Panc1 (cell line): ENCODE measurements at regions of chr11 and their contacts with region 1.

Region 1: GRCh38 chr11:77047007-77047927 is 13.1 kb downstream of the B3GNT6 start:
- DNase-seq: peak; percentile 87
- ATAC-seq: peak; percentile 89
- H3K4me3 ChIP-seq: peak overlapping the region; percentile 21 to 67
- H3K27ac ChIP-seq: no peak overlapping the region
- H3K4me1 ChIP-seq: peaks cover 7% of the 10 kb centered on the region
- H3K27me3 ChIP-seq: no peaks in the 10 kb centered on the region
- CTCF ChIP-seq: peak; percentile 69

Region 2: DNA sequence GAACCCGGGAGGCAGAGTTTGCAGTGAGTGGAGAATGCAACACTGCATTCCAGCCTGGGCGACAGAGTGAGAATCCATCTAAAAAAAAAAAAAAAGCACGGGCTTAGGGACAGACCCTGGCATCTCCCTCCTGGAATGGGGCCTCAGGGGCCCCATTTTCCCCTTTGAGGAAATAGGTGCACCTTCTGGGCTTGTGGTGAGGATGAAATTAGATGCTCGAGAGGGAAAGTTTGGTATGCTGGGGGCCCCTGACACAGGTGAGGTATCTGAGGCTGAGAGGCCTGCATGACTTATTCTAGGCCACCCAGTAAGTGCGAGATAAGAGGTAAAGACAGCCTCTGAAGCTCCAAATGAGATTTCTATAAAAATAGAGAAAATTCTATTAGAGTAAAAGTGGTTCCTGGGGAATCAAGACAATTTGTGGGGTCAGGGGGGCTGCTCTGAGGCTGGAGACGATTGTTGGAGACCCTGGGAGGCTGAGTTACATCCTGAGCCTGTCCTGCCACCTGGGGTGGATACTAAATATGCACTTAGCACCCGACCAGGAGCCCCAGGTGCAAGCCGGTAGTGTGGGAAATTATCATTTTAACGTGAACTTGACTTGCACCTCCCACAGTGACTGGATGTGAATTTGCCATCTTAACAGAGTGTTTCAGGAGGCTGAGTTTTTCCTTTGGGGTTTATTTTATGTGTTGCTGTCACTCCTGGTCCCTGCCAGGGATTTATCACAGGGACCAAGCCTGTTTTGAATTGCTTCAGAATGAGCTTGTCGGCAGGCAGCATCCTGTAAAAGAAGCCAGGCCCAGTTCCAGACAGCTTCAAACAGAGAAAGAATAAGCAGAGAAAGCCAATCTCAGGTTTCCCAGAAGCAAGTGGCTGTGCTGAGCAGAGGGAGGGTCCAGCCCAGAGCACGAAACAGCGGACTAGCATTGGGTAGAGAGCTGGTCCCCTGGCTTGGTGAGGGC is 312.5 kb before region 1 on chr11:
- CTCF ChIA-PET with region 1: interaction called, 10 read pairs
- POLR2A ChIA-PET with region 1: no interaction called
- in situ Hi-C with region 1: no loop called
- intact Hi-C with region 1: loop called (anchors 2 kb)
- DNase-seq: no peak
- ATAC-seq: 0 out of 2 replicates have a peak, but pooled peaks have one; percentile 5
- H3K4me3 ChIP-seq: no peak overlapping the region
- H3K27ac ChIP-seq: no peak overlapping the region
- H3K4me1 ChIP-seq: no peaks in the 10 kb centered on the region
- H3K27me3 ChIP-seq: no peaks in the 10 kb centered on the region
- CTCF ChIP-seq: no peak

Region 3: DNA sequence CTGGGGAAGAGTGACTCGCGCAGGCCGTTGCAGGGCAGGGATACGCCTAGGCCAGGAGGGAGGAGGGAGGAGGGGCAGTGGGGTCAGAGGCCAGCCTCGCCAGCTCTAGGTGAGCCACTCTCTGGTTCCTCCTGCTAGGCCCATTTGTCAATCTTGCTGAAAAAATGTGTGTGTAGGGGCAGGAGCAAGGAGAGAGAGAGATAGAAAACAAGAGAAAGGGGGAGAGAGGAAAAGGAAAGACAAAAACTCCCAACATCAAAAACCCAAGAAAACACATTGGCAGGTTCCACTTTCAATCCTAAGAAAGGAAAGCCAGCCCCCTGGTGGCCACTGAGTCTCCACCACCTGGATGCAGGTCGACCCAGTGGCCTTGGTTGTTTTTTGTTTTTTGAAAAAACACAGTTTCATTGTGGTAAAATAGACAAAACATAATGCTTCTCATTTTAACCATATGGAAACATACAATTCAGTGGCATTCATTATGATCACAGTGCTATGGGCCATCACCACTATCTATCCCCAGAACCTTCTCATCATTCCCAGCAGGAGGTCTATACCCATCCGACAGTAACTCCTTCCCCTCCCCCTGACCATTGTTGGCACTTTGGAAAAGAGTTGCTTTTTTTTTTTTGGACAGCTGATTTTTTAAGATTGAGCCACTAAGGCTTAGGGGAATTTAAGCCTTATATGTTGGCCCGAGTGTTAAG is 66.3 kb after region 1 on chr11:
- CTCF ChIA-PET with region 1: interaction called, 15 read pairs
- POLR2A ChIA-PET with region 1: no interaction called
- in situ Hi-C with region 1: no loop called
- intact Hi-C with region 1: loop called (anchors 5 kb)
- DNase-seq: no peak
- ATAC-seq: peak; percentile 47; the same call in 1 of the 2 replicates
- H3K4me3 ChIP-seq: no peak overlapping the region
- H3K27ac ChIP-seq: no peak overlapping the region
- H3K4me1 ChIP-seq: peaks cover 8% of the 10 kb centered on the region
- H3K27me3 ChIP-seq: no peaks in the 10 kb centered on the region
- CTCF ChIP-seq: peak; percentile 86

Region 4: GRCh38 chr11:77127232-77127911 is 80.1 kb after region 1 on chr11:
- CTCF ChIA-PET with region 1: interaction called, 11 read pairs
- POLR2A ChIA-PET with region 1: no interaction called
- in situ Hi-C with region 1: no loop called
- intact Hi-C with region 1: no loop called
- DNase-seq: no peak
- ATAC-seq: peak; percentile 82
- H3K4me3 ChIP-seq: peak overlapping the region; percentile 41 to 60
- H3K27ac ChIP-seq: no peak overlapping the region
- H3K4me1 ChIP-seq: peaks cover 7% of the 10 kb centered on the region; the same call in 1 of the 2 replicates
- H3K27me3 ChIP-seq: no peaks in the 10 kb centered on the region
- CTCF ChIP-seq: peak; percentile 100

Region 5: DNA sequence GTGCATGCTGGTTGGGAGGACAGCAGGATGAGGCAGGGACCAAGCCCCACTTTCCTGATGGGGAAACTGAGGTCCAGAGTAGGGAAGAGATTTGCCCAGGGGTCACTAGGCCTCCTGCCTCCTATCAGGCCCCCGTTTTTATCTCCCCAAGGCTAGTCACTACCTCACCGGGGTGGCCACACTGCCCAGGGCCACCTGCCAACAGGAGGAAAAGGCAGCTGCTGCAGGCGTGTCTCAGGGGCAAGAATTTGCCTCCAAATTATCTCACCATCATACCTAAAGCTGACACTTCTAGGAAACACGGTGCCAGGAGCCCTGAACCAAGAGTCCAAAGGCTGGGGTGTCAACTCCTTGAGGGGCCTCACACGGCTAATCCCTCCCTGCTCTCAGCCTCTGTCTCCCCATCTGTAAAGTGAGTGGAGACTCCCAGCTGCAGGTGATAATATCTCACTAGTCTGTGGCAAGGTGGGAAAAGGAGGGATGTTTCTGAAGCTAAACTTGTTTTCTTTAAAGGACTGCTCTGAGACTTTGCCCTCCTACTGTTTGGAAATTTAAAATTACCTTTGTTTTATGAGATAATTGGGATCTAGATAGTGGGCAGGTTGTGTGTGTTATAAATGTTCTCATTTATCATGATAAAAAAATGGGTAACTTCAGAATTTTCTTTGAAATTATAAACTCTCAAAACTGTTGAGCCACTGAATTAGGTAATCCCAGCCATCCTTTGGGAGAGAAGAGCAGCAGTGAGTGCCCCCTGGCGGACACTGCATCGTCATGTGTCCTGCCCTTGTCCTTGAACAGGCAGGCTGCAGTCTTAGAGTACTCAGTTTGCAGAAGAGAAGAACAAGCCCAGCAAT is 140.7 kb after region 1 on chr11:
- CTCF ChIA-PET with region 1: interaction called, 4 read pairs
- POLR2A ChIA-PET with region 1: no interaction called
- in situ Hi-C with region 1: no loop called
- intact Hi-C with region 1: loop called (anchors 2 kb)
- DNase-seq: peak; percentile 65
- ATAC-seq: peak; percentile 82
- H3K4me3 ChIP-seq: no peak overlapping the region
- H3K27ac ChIP-seq: no peak overlapping the region
- H3K4me1 ChIP-seq: no peaks in the 10 kb centered on the region
- H3K27me3 ChIP-seq: no peaks in the 10 kb centered on the region
- CTCF ChIP-seq: peak; percentile 98